Activated naive CD4-positive, alpha-beta T cell treated with anti-CD3 and anti-CD28 coated beads for 36 hours (primary cell): ENCODE measurements at regions of chr4 and their contacts with region 1.

Region 1: DNA sequence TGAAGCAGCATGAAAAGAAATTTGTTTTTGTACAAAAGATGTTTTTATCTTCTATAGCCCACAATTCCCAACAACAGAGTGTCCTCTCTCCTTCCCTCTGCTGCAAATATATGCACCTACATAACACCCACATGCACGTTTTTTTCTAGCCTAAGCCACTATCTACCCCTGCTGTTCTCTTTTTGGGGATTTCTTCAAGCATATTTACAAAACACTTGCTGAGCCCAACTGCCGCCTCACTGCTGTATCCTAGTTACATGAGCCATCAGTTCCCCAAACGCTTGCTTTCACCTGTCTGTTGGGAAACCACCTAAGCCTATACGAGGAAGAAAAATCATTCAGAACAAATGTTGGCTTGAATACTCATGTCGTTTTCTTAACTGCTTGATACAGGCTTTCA is 127.2 kb downstream of the CHRNA9 start:
- DNase-seq: peak; percentile 67
- H3K4me3 Mint-ChIP-seq: no peak overlapping the region
- H3K27ac Mint-ChIP-seq: peak overlapping the region; percentile 22
- H3K4me1 Mint-ChIP-seq: peaks cover 17% of the 10 kb centered on the region
- H3K27me3 Mint-ChIP-seq: no peaks in the 10 kb centered on the region

Region 2: GRCh38 chr4:40432504-40432903 is 29.8 kb before region 1 on chr4:
- CTCF ChIA-PET with region 1: interaction called, 4 read pairs
- intact Hi-C with region 1: loop called (anchors 2 kb)
- DNase-seq: no peak
- H3K4me3 Mint-ChIP-seq: no peak overlapping the region
- H3K27ac Mint-ChIP-seq: peak overlapping the region; percentile 61
- H3K4me1 Mint-ChIP-seq: peaks cover 40% of the 10 kb centered on the region
- H3K27me3 Mint-ChIP-seq: no peaks in the 10 kb centered on the region

Region 3: DNA sequence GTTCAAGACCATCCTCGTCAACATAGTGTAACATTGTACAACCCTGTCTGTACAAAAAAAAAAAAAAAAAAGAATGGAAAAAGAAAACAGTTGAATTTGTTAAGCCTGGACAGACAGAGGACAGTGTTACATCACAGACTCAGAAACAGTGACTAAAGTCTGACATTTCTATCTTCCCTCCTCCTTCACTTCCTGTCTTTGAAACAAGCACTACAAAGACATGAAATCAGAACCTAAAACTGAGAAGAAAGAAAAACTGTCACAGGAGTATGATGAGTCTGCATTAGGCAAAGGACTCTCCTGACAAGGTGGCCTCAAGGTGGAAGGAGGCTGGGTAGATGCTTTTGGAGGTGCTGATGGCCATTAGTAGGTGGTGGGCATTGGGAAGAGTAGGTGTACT is 40.6 kb after region 1 on chr4:
- CTCF ChIA-PET with region 1: interaction called, 3 read pairs
- intact Hi-C with region 1: loop called (anchors 2 kb)
- DNase-seq: peak; percentile 9
- H3K4me3 Mint-ChIP-seq: no peak overlapping the region
- H3K27ac Mint-ChIP-seq: peak overlapping the region; percentile 71
- H3K4me1 Mint-ChIP-seq: peaks cover 21% of the 10 kb centered on the region
- H3K27me3 Mint-ChIP-seq: no peaks in the 10 kb centered on the region